Activated T-helper 2 cell treated with anti-CD3 and anti-CD28 coated beads, Interferon-gamma antibody, Interleukin-2, Interleukin-4, amounts not matched to agents 10 μg/mL and 5 μg/mL and 100 μg/mL, durations not matched to agents 14 hours and 24 hours and 36 hours (primary cell): ENCODE measurements at regions of chr1 and their contacts with region 1.

Region 1: DNA sequence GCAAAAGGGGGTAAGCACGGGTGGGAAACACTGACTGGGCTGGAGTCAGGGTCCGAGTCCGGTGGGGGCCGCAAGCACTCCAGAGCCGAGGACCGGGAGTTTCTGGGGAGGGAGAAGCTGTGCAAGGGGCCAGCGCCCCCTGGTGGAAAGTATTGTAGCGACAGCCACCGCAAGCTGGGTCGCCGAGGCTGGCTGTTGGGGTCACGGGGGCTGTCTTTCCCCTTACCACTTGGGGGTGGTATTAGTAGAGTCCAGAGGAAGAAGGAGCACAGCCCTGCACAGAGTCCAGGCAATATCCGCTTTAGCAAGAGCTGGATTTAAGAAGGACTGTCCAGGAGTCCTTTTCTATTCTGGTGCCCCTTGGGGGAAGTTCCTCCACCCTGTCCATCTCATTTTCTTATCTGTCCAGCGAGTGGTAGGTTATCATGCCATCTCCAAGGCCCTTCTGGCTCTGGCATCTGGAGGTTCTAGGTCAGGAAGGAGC is 17.9 kb upstream of the ETV3 start:
- DNase-seq: peak; percentile 64
- H3K4me3 Mint-ChIP-seq: peak overlapping the region; percentile 40
- H3K27ac Mint-ChIP-seq: peak overlapping the region; percentile 73
- H3K4me1 Mint-ChIP-seq: peaks cover 37% of the 10 kb centered on the region
- H3K27me3 Mint-ChIP-seq: peaks cover 24% of the 10 kb centered on the region

Region 2: GRCh38 chr1:157090196-157090647 is 65.9 kb before region 1 on chr1:
- intact Hi-C with region 1: loop called (anchors 1 kb)
- DNase-seq: peak; percentile 73
- H3K4me3 Mint-ChIP-seq: no peak overlapping the region
- H3K27ac Mint-ChIP-seq: no peak overlapping the region
- H3K4me1 Mint-ChIP-seq: no peaks in the 10 kb centered on the region
- H3K27me3 Mint-ChIP-seq: peaks cover 2% of the 10 kb centered on the region

Region 3: GRCh38 chr1:157133426-157133825 is 22.7 kb before region 1 on chr1:
- intact Hi-C with region 1: loop called (anchors 1 kb)
- DNase-seq: peak; percentile 33
- H3K4me3 Mint-ChIP-seq: peak overlapping the region; percentile 98
- H3K27ac Mint-ChIP-seq: peak overlapping the region; percentile 67
- H3K4me1 Mint-ChIP-seq: peaks cover 52% of the 10 kb centered on the region
- H3K27me3 Mint-ChIP-seq: no peaks in the 10 kb centered on the region